Common myeloid progenitor, CD34-positive (primary cell): ENCODE measurements at regions of chr2 and their contacts with region 1.

Region 1: DNA sequence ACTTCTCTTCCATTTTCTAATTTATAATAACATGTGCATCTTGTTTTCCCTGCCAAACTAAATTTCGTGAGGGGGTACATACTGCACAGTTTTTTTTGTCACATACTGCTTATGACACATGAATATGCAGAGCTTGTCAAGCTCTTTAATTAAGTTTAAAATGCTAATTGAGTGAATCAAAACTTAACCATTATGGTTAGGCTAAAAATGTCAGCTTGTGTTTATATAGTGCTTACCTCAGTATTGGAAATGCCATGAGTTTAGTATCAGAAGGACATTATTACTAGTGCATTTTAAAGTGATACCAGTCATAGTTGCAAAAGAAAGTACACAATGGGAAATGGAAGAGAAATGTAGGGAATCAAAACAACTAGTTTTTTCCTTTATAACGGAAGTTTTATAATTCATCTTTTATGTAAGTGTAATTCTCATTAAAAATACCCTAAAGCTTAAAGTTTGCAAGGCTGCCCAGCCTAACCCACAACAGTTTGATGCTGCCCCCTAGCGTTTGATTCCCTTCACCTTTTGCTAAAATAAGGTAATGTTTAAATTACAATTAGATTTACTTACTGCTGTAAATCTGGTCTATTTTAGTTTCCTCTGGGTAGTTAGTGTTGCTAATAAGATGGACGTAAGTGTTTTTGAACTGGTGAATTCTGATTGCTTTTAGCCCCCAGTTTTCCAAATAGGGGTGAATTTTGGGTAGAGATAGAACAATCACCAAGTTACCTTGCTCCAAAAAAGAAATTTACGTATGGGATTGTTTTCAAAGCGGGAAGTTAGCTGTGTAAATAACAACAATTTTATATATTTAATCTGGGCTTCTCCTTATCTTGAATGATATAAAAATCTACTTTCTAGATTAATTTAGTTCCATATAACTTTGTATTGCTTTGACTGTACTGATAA is 3.2 kb downstream of the SLC39A10 start:
- DNase-seq: peak; percentile 82 to 90 (median 86)
- H3K4me3 ChIP-seq: peak overlapping the region in 5 of 7 experiments; percentile 43 to 89 (median 81)
- H3K27ac ChIP-seq: peak overlapping the region in 1 of 2 experiments; percentile 97
- H3K4me1 ChIP-seq: peaks cover 23 to 49% (median 35%) of the 10 kb centered on the region in 4 experiments
- H3K27me3 ChIP-seq: no peaks in the 10 kb centered on the region

Region 2: GRCh38 chr2:195498176-195498575 is 162.1 kb before region 1 on chr2:
- CTCF ChIA-PET with region 1: interaction called, 34 read pairs
- POLR2A ChIA-PET with region 1: no interaction called
- DNase-seq: peak; percentile 61 to 65 (median 63)
- H3K4me3 ChIP-seq: no peak overlapping the region
- H3K27ac ChIP-seq: no peak overlapping the region
- H3K4me1 ChIP-seq: peaks cover 0 to 10% (median 3%) of the 10 kb centered on the region in 4 experiments
- H3K27me3 ChIP-seq: no peaks in the 10 kb centered on the region

Region 3: DNA sequence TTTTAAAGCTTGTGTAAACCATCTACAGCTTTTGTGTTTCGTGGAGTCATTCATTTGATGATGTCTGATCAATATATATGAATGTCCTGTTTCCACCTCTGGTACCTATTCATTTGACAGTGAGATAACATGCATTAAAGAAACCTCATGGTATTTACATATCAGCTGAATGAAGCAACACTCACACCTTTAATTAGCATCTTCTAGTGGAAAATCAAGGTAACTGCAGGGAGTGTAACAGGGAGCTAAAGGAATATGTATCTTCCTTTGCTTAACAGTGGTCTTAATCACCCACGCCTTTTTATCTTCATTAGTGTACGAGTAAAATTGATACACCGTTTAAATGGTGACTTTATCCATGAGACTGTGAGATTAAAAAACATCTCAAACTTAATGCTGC is 12.4 kb after region 1 on chr2:
- CTCF ChIA-PET with region 1: interaction called, 16 read pairs
- POLR2A ChIA-PET with region 1: no interaction called
- DNase-seq: no peak
- H3K4me3 ChIP-seq: no peak overlapping the region
- H3K27ac ChIP-seq: no peak overlapping the region
- H3K4me1 ChIP-seq: no peaks in the 10 kb centered on the region
- H3K27me3 ChIP-seq: no peaks in the 10 kb centered on the region

Region 4: DNA sequence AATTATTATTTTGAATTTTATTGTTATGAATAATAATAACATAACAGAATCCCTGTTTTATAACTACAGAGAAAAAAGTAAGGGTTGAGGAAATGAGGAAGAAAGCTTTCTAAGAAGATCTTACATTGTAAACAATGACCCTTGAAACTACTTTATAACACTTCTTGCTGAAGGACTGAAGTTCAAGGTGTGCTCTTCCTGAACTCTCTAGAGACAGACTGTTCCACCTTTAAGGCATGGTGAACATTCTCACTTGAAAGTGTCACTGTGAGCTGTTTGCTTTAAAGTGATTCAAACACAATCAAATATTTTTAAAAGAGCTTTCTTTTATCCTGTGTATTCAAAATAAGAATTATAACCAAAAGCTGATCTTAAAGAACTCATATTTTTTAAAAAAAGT is 276.9 kb after region 1 on chr2:
- CTCF ChIA-PET with region 1: interaction called, 24 read pairs
- POLR2A ChIA-PET with region 1: no interaction called
- DNase-seq: no peak
- H3K4me3 ChIP-seq: no peak overlapping the region
- H3K27ac ChIP-seq: no peak overlapping the region
- H3K4me1 ChIP-seq: no peaks in the 10 kb centered on the region
- H3K27me3 ChIP-seq: no peaks in the 10 kb centered on the region

Region 5: GRCh38 chr2:196068271-196069209 is 408.3 kb after region 1 on chr2 and contains the start of gene DNAH7:
- CTCF ChIA-PET with region 1: interaction called, 16 read pairs
- POLR2A ChIA-PET with region 1: interaction called, 5 read pairs
- DNase-seq: peak; percentile 91 to 97 (median 96)
- H3K4me3 ChIP-seq: peak within 1 kb of the TSS; percentile 29 to 76 (median 66)
- H3K27ac ChIP-seq: peak within 1 kb of the TSS; percentile 11 to 61
- H3K4me1 ChIP-seq: peaks cover 4 to 28% (median 13%) of the 10 kb centered on the region in 4 experiments
- H3K27me3 ChIP-seq: no peaks in the 10 kb centered on the region